A673 (cell line): ENCODE measurements at regions of chr15 and their contacts with region 1.

Region 1: DNA sequence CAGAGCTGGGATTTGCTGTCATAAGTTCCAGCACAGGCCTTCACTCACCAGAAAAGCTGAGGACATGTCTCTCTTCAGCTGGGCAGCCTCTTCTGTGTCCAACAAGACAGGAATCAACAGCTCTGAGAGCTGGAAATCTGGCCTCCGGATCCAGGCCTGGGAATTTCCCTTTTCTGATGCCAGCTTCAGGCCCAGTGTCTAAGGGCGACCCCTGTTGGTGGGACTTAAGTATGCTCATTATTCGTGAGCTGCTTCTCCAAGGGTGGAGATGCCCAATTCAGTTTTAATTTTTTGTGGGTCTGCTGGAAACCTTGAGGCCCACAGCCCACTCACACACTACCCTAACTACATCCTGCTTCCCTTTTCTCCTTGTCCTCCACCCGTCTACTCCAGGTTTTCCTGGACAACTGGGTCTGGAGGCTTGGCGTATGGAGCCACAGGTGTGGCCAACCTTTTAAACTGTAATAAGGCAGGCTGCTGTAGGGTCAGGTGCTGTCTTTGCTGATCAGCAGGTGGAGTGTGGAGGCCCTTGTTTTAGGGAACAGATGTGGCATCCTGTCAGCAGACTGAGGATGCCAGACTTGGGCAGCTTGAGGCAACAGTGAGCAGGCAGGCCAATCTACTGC is 2.6 kb upstream of the CEMIP start:
- DNase-seq: peak; percentile 75
- H3K4me3 ChIP-seq: no peak overlapping the region
- H3K27ac ChIP-seq: no peak overlapping the region
- H3K4me1 ChIP-seq: no peaks in the 10 kb centered on the region
- H3K27me3 ChIP-seq: peaks cover 33% of the 10 kb centered on the region
- CTCF ChIP-seq: peak; percentile 80

Region 2: GRCh38 chr15:80455668-80456442 is 320.7 kb before region 1 on chr15:
- CTCF ChIA-PET with region 1: interaction called, 3 read pairs
- POLR2A ChIA-PET with region 1: no interaction called
- intact Hi-C with region 1: loop called (anchors 1 kb)
- DNase-seq: peak; percentile 66
- H3K4me3 ChIP-seq: no peak overlapping the region
- H3K27ac ChIP-seq: no peak overlapping the region
- H3K4me1 ChIP-seq: no peaks in the 10 kb centered on the region
- H3K27me3 ChIP-seq: no peaks in the 10 kb centered on the region
- CTCF ChIP-seq: peak; percentile 93

Region 3: GRCh38 chr15:80567721-80568157 is 208.8 kb before region 1 on chr15:
- CTCF ChIA-PET with region 1: interaction called, 41 read pairs
- POLR2A ChIA-PET with region 1: no interaction called
- intact Hi-C with region 1: loop called (anchors 1 kb)
- DNase-seq: peak; percentile 75
- H3K4me3 ChIP-seq: no peak overlapping the region
- H3K27ac ChIP-seq: no peak overlapping the region
- H3K4me1 ChIP-seq: no peaks in the 10 kb centered on the region
- H3K27me3 ChIP-seq: no peaks in the 10 kb centered on the region
- CTCF ChIP-seq: peak; percentile 72

Region 4: GRCh38 chr15:80619680-80620079 is 156.9 kb before region 1 on chr15:
- CTCF ChIA-PET with region 1: interaction called, 3 read pairs
- POLR2A ChIA-PET with region 1: no interaction called
- intact Hi-C with region 1: loop called (anchors 1 kb)
- DNase-seq: no peak
- H3K4me3 ChIP-seq: no peak overlapping the region
- H3K27ac ChIP-seq: no peak overlapping the region
- H3K4me1 ChIP-seq: peaks cover 11% of the 10 kb centered on the region
- H3K27me3 ChIP-seq: no peaks in the 10 kb centered on the region
- CTCF ChIP-seq: 0 out of 2 replicates have a peak, but pooled peaks have one; percentile 21

Region 5: GRCh38 chr15:80660122-80660521 is 116.4 kb before region 1 on chr15:
- CTCF ChIA-PET with region 1: interaction called, 7 read pairs
- POLR2A ChIA-PET with region 1: no interaction called
- intact Hi-C with region 1: loop called (anchors 10 kb)
- DNase-seq: peak; percentile 3
- H3K4me3 ChIP-seq: no peak overlapping the region
- H3K27ac ChIP-seq: no peak overlapping the region
- H3K4me1 ChIP-seq: no peaks in the 10 kb centered on the region
- H3K27me3 ChIP-seq: no peaks in the 10 kb centered on the region
- CTCF ChIP-seq: peak; percentile 37

Region 6: GRCh38 chr15:80727196-80727595 is 49.3 kb before region 1 on chr15:
- CTCF ChIA-PET with region 1: no interaction called
- POLR2A ChIA-PET with region 1: no interaction called
- intact Hi-C with region 1: no loop called
- DNase-seq: no peak
- H3K4me3 ChIP-seq: no peak overlapping the region
- H3K27ac ChIP-seq: no peak overlapping the region
- H3K4me1 ChIP-seq: no peaks in the 10 kb centered on the region
- H3K27me3 ChIP-seq: no peaks in the 10 kb centered on the region
- CTCF ChIP-seq: no peak

Region 7: GRCh38 chr15:80970018-80970658 is 193.6 kb after region 1 on chr15:
- CTCF ChIA-PET with region 1: interaction called, 9 read pairs
- POLR2A ChIA-PET with region 1: no interaction called
- intact Hi-C with region 1: loop called (anchors 1 kb)
- DNase-seq: peak; percentile 76
- H3K4me3 ChIP-seq: no peak overlapping the region
- H3K27ac ChIP-seq: no peak overlapping the region
- H3K4me1 ChIP-seq: peaks cover 3% of the 10 kb centered on the region
- H3K27me3 ChIP-seq: no peaks in the 10 kb centered on the region
- CTCF ChIP-seq: peak; percentile 78